ENCODE measurements at regions of chr6 and their contacts with region 1.

Region 1: DNA sequence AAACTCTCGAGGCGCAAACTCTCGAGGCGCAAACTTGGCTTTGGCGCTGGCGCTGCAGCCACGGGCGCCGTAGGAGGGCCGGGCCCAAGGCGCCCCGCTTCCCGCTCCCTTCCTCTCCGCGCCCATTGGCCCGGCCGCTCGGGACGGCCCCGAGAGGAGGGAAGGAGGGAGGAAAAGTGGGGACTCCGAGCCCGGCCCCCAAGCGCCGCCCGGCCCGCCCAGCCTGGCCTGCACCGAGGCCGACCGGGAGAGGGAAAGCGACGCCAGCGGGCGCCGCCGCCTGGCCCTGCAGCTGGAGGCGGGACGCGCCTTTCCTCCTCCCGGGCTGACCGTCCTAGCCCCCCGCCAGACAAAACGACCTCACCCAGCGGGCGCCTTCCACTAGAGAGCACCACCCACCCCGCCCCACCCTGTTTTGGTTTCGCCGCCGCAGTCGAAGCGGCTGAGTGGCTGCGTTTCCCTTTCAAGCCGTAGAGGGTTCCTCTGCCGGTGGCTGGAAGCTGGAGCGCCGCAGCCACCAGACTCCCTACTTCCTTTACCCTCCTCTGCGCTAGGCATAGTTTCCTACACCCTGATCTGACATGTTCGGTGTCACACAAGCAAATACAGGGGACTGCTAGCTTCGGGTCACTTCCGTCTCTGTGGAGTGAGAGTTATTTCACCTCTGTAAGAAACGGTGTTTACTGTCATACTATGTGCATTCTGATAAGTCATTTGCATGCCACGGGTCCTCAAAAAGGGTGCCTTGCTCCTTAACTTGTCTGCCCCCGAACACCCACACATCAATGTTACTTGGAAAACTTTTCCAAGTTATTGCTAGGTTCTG is at the start of gene MBOAT1:
- DNase-seq: peak; percentile 85
- ATAC-seq: peak; percentile 89
- H3K4me3 Mint-ChIP-seq: peak within 1 kb of the TSS; percentile 95
- H3K27ac Mint-ChIP-seq: peak within 1 kb of the TSS; percentile 97
- H3K4me1 Mint-ChIP-seq: peaks cover 37% of the 10 kb centered on the region
- H3K27me3 Mint-ChIP-seq: no peaks in the 10 kb centered on the region
- total RNA-seq, gene MBOAT1: 13.3 to 16.1 TPM

Region 2: DNA sequence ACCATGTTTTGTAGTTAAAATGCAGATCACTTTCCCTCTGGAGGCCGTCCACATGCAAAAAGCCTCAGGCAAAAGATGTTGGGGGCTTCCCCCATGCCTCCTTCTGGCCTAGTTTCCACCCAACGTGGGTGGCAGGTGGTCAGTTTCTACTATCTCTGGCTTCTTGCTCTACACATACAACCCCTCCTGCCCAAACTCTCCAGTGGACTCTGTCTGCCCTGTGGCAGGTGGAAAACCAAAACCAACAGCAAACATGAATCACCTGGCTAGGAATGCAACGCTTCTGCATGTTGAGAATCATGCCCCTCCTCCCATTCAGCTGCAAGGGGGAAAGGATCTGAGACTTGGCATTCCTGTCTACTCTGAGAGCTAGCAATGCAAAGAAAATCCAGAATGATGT is 95.1 kb before region 1 on chr6:
- CTCF ChIA-PET with region 1: no interaction called
- POLR2A ChIA-PET with region 1: no interaction called
- intact Hi-C with region 1: no loop called
- DNase-seq: no peak
- ATAC-seq: no peak
- H3K4me3 Mint-ChIP-seq: no peak overlapping the region
- H3K27ac Mint-ChIP-seq: no peak overlapping the region
- H3K4me1 Mint-ChIP-seq: peaks cover 4% of the 10 kb centered on the region
- H3K27me3 Mint-ChIP-seq: no peaks in the 10 kb centered on the region

Region 3: GRCh38 chr6:20202324-20202658 is 10.3 kb before region 1 on chr6:
- CTCF ChIA-PET with region 1: interaction called, 4 read pairs
- POLR2A ChIA-PET with region 1: interaction called, 4 read pairs
- intact Hi-C with region 1: loop called (anchors 1 kb)
- DNase-seq: no peak
- ATAC-seq: no peak
- H3K4me3 Mint-ChIP-seq: no peak overlapping the region
- H3K27ac Mint-ChIP-seq: no peak overlapping the region
- H3K4me1 Mint-ChIP-seq: peaks cover 59% of the 10 kb centered on the region
- H3K27me3 Mint-ChIP-seq: no peaks in the 10 kb centered on the region

Region 4: GRCh38 chr6:20319520-20320357 is 107.1 kb after region 1 on chr6:
- CTCF ChIA-PET with region 1: no interaction called
- POLR2A ChIA-PET with region 1: no interaction called
- intact Hi-C with region 1: no loop called
- DNase-seq: peak; percentile 86
- ATAC-seq: peak; percentile 96
- H3K4me3 Mint-ChIP-seq: peak overlapping the region; percentile 78
- H3K27ac Mint-ChIP-seq: peak overlapping the region; percentile 96
- H3K4me1 Mint-ChIP-seq: peaks cover 11% of the 10 kb centered on the region
- H3K27me3 Mint-ChIP-seq: no peaks in the 10 kb centered on the region

Region 5: GRCh38 chr6:20732896-20733295 is 520.3 kb after region 1 on chr6:
- CTCF ChIA-PET with region 1: no interaction called
- POLR2A ChIA-PET with region 1: no interaction called
- intact Hi-C with region 1: no loop called
- DNase-seq: no peak
- ATAC-seq: no peak
- H3K4me3 Mint-ChIP-seq: no peak overlapping the region
- H3K27ac Mint-ChIP-seq: no peak overlapping the region
- H3K4me1 Mint-ChIP-seq: peaks cover 2% of the 10 kb centered on the region
- H3K27me3 Mint-ChIP-seq: no peaks in the 10 kb centered on the region

Measured in activated CD4-positive, alpha-beta T cell treated with anti-CD3 and anti-CD28 coated beads for 36 hours (primary cell).